T-cell (primary cell): ENCODE measurements at regions of chr10 and their contacts with region 1.

Region 1: DNA sequence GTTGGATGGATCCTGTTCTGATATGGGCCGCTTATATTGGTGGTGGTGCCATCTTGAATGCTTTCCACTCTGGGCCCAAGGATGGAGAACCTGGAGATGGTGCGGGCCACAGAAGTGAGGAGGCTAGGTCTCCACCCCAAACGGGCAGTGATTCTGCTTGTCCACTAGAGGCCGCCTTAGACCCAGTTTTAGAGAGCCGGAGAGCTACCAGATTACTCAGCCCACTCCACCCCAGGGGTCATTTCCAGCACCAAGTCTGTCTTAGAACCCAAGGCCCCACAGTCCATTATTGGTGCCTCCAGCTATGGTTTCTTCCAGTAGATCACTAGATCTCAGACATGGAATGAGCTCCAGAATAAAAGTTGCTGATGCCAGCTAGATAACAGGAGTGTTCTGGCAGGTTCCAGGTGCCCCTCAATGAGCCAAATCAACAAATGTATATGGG is 11.8 kb upstream of the CAMK2G start:
- DNase-seq: peak; percentile 22 to 82 (median 56)
- ATAC-seq: peak; percentile 95 to 98 (median 96)
- H3K4me3 ChIP-seq: no peak overlapping the region
- H3K4me3 Mint-ChIP-seq: no peak overlapping the region
- H3K27ac ChIP-seq: no peak overlapping the region
- H3K27ac Mint-ChIP-seq: no peak overlapping the region
- H3K4me1 ChIP-seq: peaks cover 0 to 6% of the 10 kb centered on the region in 2 experiments
- H3K4me1 Mint-ChIP-seq: peaks cover 6 to 10% (median 9%) of the 10 kb centered on the region in 3 donors
- H3K27me3 ChIP-seq: peaks cover 0 to 3% of the 10 kb centered on the region in 2 experiments
- H3K27me3 Mint-ChIP-seq: no peaks in the 10 kb centered on the region

Region 2: GRCh38 chr10:73332221-73332778 is 553.8 kb before region 1 on chr10:
- CTCF ChIA-PET with region 1: no interaction called
- POLR2A ChIA-PET with region 1: no interaction called
- DNase-seq: no peak
- ATAC-seq: no peak
- H3K4me3 ChIP-seq: no peak overlapping the region
- H3K4me3 Mint-ChIP-seq: no peak overlapping the region
- H3K27ac ChIP-seq: no peak overlapping the region
- H3K27ac Mint-ChIP-seq: no peak overlapping the region
- H3K4me1 ChIP-seq: no peaks in the 10 kb centered on the region
- H3K4me1 Mint-ChIP-seq: no peaks in the 10 kb centered on the region
- H3K27me3 ChIP-seq: no peaks in the 10 kb centered on the region
- H3K27me3 Mint-ChIP-seq: no peaks in the 10 kb centered on the region

Region 3: DNA sequence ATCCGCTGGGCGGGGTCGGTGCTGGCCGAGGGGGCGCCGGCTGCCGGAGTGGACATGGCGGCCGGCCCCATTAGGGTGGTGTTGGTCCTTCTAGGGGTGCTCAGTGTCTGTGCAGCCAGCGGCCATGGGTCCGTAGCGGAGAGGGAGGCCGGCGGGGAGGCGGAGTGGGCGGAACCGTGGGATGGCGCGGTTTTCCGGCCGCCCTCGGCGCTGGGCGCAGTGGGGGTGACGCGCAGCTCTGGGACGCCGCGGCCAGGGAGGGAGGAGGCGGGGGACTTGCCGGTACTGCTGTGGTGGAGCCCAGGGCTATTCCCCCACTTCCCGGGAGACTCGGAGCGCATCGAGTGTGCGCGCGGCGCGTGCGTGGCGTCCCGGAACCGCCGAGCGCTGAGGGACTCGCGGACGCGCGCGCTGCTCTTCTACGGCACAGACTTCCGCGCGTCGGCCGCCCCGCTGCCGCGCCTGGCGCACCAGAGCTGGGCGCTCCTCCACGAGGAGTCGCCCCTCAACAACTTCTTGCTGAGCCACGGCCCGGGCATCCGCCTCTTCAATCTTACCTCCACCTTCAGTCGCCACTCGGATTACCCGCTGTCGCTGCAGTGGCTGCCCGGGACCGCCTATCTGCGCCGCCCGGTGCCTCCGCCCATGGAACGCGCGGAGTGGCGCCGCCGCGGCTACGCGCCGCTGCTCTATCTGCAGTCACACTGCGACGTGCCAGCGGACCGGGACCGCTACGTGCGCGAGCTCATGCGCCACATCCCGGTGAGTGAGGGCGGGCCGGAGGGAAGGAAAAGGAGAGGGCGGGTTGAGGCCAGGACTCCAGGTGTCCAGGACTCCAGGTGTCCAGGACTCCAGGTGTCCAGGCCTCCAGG is 113.6 kb before region 1 on chr10:
- CTCF ChIA-PET with region 1: no interaction called
- POLR2A ChIA-PET with region 1: no interaction called
- DNase-seq: peak; percentile 64 to 92 (median 74)
- ATAC-seq: peak; percentile 72 to 75 (median 74)
- H3K4me3 ChIP-seq: peak overlapping the region; percentile 74 to 92
- H3K4me3 Mint-ChIP-seq: peak overlapping the region; percentile 93 to 97 (median 94)
- H3K27ac ChIP-seq: peak overlapping the region; percentile 84
- H3K27ac Mint-ChIP-seq: peak overlapping the region; percentile 94 to 95
- H3K4me1 ChIP-seq: peaks cover 25 to 56% of the 10 kb centered on the region in 2 experiments
- H3K4me1 Mint-ChIP-seq: peaks cover 57 to 67% (median 65%) of the 10 kb centered on the region in 3 donors
- H3K27me3 ChIP-seq: no peaks in the 10 kb centered on the region
- H3K27me3 Mint-ChIP-seq: no peaks in the 10 kb centered on the region

Region 4: DNA sequence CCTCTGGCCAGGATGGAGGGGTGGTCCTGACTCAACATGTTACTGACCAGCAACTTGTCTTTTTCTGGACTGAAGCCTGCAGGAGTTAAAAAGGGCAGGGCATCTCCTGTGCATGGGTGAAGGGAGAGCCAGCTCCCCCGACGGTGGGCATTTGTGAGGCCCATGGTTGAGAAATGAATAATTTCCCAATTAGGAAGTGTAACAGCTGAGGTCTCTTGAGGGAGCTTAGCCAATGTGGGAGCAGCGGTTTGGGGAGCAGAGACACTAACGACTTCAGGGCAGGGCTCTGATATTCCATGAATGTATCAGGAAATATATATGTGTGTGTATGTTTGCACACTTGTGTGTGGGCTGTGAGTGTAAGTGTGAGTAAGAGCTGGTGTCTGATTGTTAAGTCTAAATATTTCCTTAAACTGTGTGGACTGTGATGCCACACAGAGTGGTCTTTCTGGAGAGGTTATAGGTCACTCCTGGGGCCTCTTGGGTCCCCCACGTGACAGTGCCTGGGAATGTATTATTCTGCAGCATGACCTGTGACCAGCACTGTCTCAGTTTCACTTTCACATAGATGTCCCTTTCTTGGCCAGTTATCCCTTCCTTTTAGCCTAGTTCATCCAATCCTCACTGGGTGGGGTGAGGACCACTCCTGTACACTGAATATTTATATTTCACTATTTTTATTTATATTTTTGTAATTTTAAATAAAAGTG is 30.8 kb after region 1 on chr10:
- CTCF ChIA-PET with region 1: no interaction called
- POLR2A ChIA-PET with region 1: no interaction called
- DNase-seq: no peak
- ATAC-seq: no peak
- H3K4me3 ChIP-seq: no peak overlapping the region
- H3K4me3 Mint-ChIP-seq: no peak overlapping the region
- H3K27ac ChIP-seq: no peak overlapping the region
- H3K27ac Mint-ChIP-seq: no peak overlapping the region
- H3K4me1 ChIP-seq: peaks cover 5 to 26% of the 10 kb centered on the region in 2 experiments
- H3K4me1 Mint-ChIP-seq: peaks cover 16 to 28% (median 21%) of the 10 kb centered on the region in 3 donors
- H3K27me3 ChIP-seq: peaks cover 0 to 48% of the 10 kb centered on the region in 2 experiments
- H3K27me3 Mint-ChIP-seq: peaks cover 15 to 29% of the 10 kb centered on the region in 2 donors

Region 5: GRCh38 chr10:73940634-73941221 is 54.6 kb after region 1 on chr10:
- CTCF ChIA-PET with region 1: interaction called, 17 to 63 read pairs
- POLR2A ChIA-PET with region 1: interaction called, 3 read pairs
- DNase-seq: peak; percentile 53 to 88 (median 79)
- ATAC-seq: peak; percentile 98 to 100 (median 98)
- H3K4me3 ChIP-seq: peak overlapping the region in 1 of 2 donors; percentile 5
- H3K4me3 Mint-ChIP-seq: peak overlapping the region; percentile 36 to 37 (median 37)
- H3K27ac ChIP-seq: no peak overlapping the region
- H3K27ac Mint-ChIP-seq: peak overlapping the region in 1 of 2 donors; percentile 58
- H3K4me1 ChIP-seq: peaks cover 0 to 9% of the 10 kb centered on the region in 2 experiments
- H3K4me1 Mint-ChIP-seq: peaks cover 5 to 8% (median 7%) of the 10 kb centered on the region in 3 donors
- H3K27me3 ChIP-seq: peaks cover 0 to 2% of the 10 kb centered on the region in 2 experiments
- H3K27me3 Mint-ChIP-seq: no peaks in the 10 kb centered on the region

Region 6: DNA sequence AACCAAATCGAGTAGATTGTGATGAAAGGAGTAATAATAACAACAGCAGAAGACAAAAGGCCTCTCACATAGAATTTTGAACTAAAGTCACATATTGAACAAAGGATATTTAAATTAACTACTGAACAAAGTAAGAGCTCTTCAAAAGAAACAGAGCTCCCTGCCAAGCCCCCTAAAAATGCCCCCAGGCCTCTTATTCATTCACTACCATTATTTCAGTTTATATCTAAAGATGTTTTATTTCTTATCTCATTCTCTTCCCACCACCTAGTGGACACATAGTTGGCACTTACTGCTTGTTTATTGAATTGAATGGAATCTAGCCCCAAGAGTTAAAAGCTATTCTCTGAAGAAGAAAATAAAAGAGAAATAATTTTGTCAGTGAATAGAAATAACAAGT is 149.2 kb after region 1 on chr10:
- CTCF ChIA-PET with region 1: interaction called, 5 to 10 read pairs
- POLR2A ChIA-PET with region 1: interaction called in 1 of 2 experiments, 3 read pairs
- DNase-seq: peak in 1 of 35 experiments; percentile 44
- ATAC-seq: no peak
- H3K4me3 ChIP-seq: no peak overlapping the region
- H3K4me3 Mint-ChIP-seq: no peak overlapping the region
- H3K27ac ChIP-seq: peak overlapping the region; percentile 21
- H3K27ac Mint-ChIP-seq: peak overlapping the region; percentile 13 to 79
- H3K4me1 ChIP-seq: peaks cover 0 to 8% of the 10 kb centered on the region in 2 experiments
- H3K4me1 Mint-ChIP-seq: peaks cover 43 to 52% (median 46%) of the 10 kb centered on the region in 3 donors
- H3K27me3 ChIP-seq: no peaks in the 10 kb centered on the region
- H3K27me3 Mint-ChIP-seq: no peaks in the 10 kb centered on the region

Region 7: GRCh38 chr10:74081192-74081803 is 195.2 kb after region 1 on chr10:
- CTCF ChIA-PET with region 1: interaction called, 3 to 36 read pairs
- POLR2A ChIA-PET with region 1: interaction called in 1 of 2 experiments, 4 read pairs
- DNase-seq: peak in 25 of 35 experiments; percentile 6 to 66 (median 23)
- ATAC-seq: peak; percentile 53 to 73 (median 63)
- H3K4me3 ChIP-seq: no peak overlapping the region
- H3K4me3 Mint-ChIP-seq: no peak overlapping the region
- H3K27ac ChIP-seq: no peak overlapping the region
- H3K27ac Mint-ChIP-seq: peak overlapping the region in 1 of 2 donors; percentile 29
- H3K4me1 ChIP-seq: no peaks in the 10 kb centered on the region
- H3K4me1 Mint-ChIP-seq: peaks cover 9 to 38% (median 31%) of the 10 kb centered on the region in 3 donors
- H3K27me3 ChIP-seq: no peaks in the 10 kb centered on the region
- H3K27me3 Mint-ChIP-seq: no peaks in the 10 kb centered on the region